Mammary epithelial cell (primary cell): ENCODE measurements at regions of chr2 and their contacts with region 1.

Region 1: GRCh38 chr2:238945433-238946150 is 97.7 kb downstream of the TWIST2 start:
- DNase-seq: no peak
- H3K4me3 ChIP-seq: no peak overlapping the region
- H3K27ac ChIP-seq: no peak overlapping the region
- H3K4me1 ChIP-seq: peaks cover 55% of the 10 kb centered on the region
- H3K27me3 ChIP-seq: no peaks in the 10 kb centered on the region
- CTCF ChIP-seq: peak; percentile 77 to 93

Region 2: DNA sequence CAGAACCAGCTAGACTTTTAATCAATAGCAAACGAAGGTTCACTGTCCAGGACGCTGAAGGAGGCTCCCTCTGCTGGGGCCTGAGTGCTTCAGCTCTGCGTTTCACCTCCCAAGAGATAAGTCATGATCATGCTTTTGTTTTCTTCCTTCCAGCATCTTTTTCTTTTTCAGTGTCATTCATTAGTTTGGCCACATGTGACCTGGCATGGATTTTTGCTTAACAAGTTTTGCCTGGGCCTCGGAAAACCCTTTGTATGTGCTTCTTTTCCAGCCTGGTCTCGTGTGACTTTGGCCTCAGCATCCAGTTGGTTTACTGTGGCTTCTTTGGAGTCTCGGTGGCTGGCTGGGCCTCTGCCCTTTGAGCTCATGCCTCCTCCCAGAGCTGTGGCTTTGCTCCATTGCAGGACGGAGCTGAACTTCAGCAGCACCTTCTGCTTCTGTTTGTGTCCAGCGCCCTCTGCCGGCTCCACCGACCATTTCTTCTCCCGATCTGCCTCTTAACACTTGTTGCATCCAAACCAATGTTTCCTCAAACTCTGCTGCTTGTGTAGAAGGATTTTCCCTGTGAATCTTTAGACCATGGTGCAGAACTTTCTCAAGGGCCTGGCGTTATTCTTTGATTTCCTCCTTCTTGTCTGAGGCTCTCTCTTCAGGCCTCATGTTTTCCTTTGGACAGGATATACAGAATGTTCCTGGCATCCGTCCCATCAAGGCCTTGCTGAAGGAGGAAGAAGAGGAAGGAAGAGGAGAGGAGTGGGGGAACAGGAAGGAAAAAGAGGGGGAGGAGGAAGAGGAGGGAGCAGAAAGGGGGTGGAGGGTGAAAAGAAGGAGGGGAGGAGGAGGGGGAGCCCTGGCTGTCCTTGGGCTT is 682.2 kb before region 1 on chr2:
- CTCF ChIA-PET with region 1: no interaction called
- dilution Hi-C with region 1: no loop called
- in situ Hi-C with region 1: no loop called
- intact Hi-C with region 1: no loop called
- DNase-seq: peak; percentile 67
- H3K4me3 ChIP-seq: no peak overlapping the region
- H3K27ac ChIP-seq: no peak overlapping the region
- H3K4me1 ChIP-seq: peaks cover 22% of the 10 kb centered on the region
- H3K27me3 ChIP-seq: no peaks in the 10 kb centered on the region
- CTCF ChIP-seq: peak; percentile 78 to 79

Region 3: DNA sequence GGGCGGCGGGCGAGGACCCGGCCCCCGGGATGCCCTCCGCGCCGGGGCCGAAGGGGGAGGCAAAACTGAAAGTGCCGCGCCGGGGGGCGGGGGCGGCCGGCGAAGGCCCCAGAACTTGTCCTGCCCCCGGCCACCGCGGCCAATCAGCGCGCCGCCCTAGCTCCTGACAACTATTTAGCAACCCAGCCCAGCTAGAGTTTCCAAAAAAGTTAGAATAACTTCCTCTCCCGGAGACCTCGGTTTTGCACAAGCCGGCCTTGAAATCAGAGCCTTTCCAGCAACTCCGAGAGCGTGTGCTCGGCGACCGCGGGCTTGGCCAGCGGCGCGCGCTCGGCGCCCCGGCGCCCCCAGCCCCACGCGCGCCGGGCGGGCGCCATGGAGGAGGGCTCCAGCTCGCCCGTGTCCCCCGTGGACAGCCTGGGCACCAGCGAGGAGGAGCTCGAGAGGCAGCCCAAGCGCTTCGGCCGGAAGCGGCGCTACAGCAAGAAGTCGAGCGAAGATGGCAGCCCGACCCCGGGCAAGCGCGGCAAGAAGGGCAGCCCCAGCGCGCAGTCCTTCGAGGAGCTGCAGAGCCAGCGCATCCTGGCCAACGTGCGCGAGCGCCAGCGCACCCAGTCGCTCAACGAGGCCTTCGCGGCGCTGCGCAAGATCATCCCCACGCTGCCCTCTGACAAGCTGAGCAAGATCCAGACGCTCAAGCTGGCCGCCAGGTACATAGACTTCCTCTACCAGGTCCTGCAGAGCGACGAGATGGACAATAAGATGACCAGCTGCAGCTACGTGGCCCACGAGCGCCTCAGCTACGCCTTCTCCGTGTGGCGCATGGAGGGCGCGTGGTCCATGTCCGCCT is 97.5 kb before region 1 on chr2 and contains the start of gene TWIST2:
- CTCF ChIA-PET with region 1: interaction called, 5 read pairs
- dilution Hi-C with region 1: no loop called
- in situ Hi-C with region 1: no loop called
- intact Hi-C with region 1: loop called (anchors 1 kb)
- DNase-seq: peak; percentile 78
- H3K4me3 ChIP-seq: peak within 1 kb of the TSS; percentile 61 to 98 (median 90)
- H3K27ac ChIP-seq: peak within 1 kb of the TSS; percentile 38
- H3K4me1 ChIP-seq: peaks cover 14% of the 10 kb centered on the region
- H3K27me3 ChIP-seq: no peaks in the 10 kb centered on the region
- CTCF ChIP-seq: no peak
- total RNA-seq, gene TWIST2: 0.83 to 17.6 TPM

Region 4: GRCh38 chr2:238914648-238915015 is 31.0 kb before region 1 on chr2:
- CTCF ChIA-PET with region 1: no interaction called
- dilution Hi-C with region 1: no loop called
- in situ Hi-C with region 1: no loop called
- intact Hi-C with region 1: no loop called
- DNase-seq: peak; percentile 33
- H3K4me3 ChIP-seq: no peak overlapping the region
- H3K27ac ChIP-seq: no peak overlapping the region
- H3K4me1 ChIP-seq: peaks cover 30% of the 10 kb centered on the region
- H3K27me3 ChIP-seq: no peaks in the 10 kb centered on the region
- CTCF ChIP-seq: no peak